WTC11 (cell line): ENCODE measurements at regions of chr10 and their contacts with region 1.

Region 1: GRCh38 chr10:78047314-78047891 is 13.7 kb downstream of the RPS24 start:
- DNase-seq: peak; percentile 97
- ATAC-seq: peak; percentile 65
- H3K4me3 Mint-ChIP-seq: no peak overlapping the region
- H3K27ac Mint-ChIP-seq: no peak overlapping the region
- H3K4me1 Mint-ChIP-seq: peaks cover 33% of the 10 kb centered on the region
- H3K27me3 Mint-ChIP-seq: no peaks in the 10 kb centered on the region
- CTCF ChIP-seq: peak; percentile 92

Region 2: DNA sequence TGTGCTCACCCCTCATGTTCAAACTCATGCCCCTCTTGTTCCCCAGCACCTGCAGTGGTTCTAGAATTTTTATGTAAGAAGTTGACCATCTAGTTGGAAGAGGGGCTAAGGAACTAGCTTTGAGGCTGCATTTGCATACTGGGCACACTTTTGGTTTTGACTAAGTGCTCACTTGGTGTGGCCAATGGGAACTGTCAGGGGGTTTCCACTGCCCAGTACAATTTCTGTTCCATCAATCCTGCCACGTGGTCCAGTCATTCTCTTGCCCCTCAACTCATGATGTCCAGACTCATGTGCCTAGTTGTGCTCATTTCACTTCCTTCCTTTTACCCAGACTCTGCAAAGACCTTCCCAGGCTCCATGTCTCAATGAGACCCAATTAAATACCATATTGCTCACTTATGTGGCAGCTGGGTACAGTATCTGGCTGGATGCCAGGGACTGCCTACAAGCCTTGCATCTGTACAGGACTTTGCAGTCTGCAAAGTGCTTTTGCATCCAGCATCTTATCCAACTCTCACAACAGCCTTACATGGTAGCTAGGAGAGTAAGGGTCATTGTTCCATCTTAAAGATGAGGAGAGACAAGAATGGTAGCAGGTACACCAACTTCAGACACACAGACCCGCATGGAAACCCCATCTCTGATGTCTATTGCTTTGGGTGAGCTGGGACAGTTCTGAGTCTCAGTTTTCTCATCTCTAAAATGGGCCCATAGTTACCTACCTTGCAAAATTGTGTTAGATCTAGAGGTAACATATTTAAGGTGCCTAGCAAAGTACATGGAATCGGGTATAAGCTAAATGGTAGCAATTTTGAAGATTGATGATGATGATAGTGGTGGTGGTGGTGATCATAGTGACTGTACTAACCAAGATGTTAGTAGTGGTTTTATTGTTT is 379.7 kb before region 1 on chr10:
- CTCF ChIA-PET with region 1: no interaction called
- POLR2A ChIA-PET with region 1: no interaction called
- DNase-seq: no peak
- ATAC-seq: no peak
- H3K4me3 Mint-ChIP-seq: no peak overlapping the region
- H3K27ac Mint-ChIP-seq: no peak overlapping the region
- H3K4me1 Mint-ChIP-seq: peaks cover 16% of the 10 kb centered on the region
- H3K27me3 Mint-ChIP-seq: peaks cover 6% of the 10 kb centered on the region
- CTCF ChIP-seq: no peak

Region 3: DNA sequence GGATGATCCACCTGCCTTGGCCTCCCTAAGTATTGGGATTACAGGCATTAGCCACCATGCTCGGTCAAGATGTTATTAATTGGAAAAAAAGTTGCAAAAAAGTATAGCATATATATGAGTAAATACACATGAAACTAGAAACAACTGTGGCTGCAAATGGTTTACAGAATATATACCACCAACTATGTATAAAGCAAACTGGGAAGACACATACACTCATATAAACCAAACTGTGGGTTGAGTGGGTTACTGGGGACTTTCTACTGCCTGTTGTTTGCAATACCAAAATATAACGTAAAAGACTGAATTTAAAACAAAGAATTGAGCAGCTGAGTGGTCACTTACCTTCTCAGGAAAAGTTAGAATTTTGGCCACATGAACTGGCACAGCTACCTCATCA is 26.2 kb before region 1 on chr10:
- CTCF ChIA-PET with region 1: no interaction called
- POLR2A ChIA-PET with region 1: no interaction called
- DNase-seq: no peak
- ATAC-seq: no peak
- H3K4me3 Mint-ChIP-seq: no peak overlapping the region
- H3K27ac Mint-ChIP-seq: no peak overlapping the region
- H3K4me1 Mint-ChIP-seq: no peaks in the 10 kb centered on the region
- H3K27me3 Mint-ChIP-seq: no peaks in the 10 kb centered on the region
- CTCF ChIP-seq: no peak

Region 4: DNA sequence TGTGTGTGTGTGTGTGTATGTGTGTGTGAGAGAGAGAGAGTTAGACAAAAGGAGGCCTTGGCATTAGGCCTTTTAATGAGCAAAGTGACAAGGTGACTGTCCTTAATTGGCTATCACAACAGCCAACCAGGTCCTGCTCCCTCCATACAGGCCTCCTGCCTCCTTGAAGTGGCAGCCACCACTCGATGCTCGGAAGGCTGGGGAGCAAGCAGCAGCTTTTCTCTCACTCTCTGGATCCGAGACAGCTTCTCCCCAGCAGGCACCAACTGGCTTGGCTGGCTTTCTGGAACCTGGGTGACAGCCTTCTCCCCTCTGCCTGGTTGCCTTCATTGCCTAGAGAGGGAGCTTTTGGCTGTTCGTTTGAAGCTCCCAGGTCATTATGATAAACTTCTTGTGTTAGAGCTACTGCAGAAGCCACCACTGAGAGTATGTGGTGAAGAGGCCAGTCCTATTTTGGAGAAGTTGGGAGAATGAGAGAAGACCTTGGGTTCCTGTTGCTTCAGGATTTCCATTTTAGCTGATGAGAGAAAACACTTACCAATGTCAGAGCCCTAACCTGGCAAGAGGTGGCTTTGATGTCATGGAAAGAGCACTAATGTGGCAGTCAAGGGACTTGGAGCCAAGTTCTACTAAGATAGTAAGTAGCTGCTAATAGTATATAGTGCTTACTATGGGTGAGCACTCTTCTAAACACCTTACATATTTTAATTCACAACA is 23.9 kb after region 1 on chr10:
- CTCF ChIA-PET with region 1: interaction called, 13 read pairs
- POLR2A ChIA-PET with region 1: interaction called, 4 read pairs
- DNase-seq: no peak
- ATAC-seq: no peak
- H3K4me3 Mint-ChIP-seq: no peak overlapping the region
- H3K27ac Mint-ChIP-seq: no peak overlapping the region
- H3K4me1 Mint-ChIP-seq: peaks cover 5% of the 10 kb centered on the region
- H3K27me3 Mint-ChIP-seq: peaks cover 5% of the 10 kb centered on the region; the same call in 1 of the 2 replicates
- CTCF ChIP-seq: no peak

Region 5: DNA sequence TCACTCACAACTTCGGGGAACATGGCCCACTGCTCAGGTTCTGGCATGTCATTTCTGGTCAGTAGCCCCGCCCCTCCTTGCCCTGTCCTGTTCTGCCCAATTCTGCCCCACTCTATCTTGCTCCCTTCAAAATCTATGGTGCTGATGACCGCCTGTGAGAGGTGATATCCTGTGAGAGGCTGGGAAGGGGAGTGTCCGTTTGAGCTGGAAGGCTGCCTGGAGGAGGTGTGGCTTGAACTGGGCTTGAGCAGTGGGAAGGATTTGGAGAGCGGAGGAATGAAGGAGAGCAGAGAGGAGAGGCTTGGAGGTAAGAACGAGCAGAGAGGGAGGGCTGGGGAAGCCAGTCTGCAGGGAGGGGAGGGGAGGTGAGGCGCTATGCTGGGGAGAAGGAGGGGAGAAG is 131.5 kb after region 1 on chr10:
- CTCF ChIA-PET with region 1: interaction called, 19 read pairs
- POLR2A ChIA-PET with region 1: no interaction called
- DNase-seq: no peak
- ATAC-seq: peak; percentile 89
- H3K4me3 Mint-ChIP-seq: no peak overlapping the region
- H3K27ac Mint-ChIP-seq: no peak overlapping the region
- H3K4me1 Mint-ChIP-seq: peaks cover 34% of the 10 kb centered on the region
- H3K27me3 Mint-ChIP-seq: peaks cover 5% of the 10 kb centered on the region
- CTCF ChIP-seq: no peak

Region 6: DNA sequence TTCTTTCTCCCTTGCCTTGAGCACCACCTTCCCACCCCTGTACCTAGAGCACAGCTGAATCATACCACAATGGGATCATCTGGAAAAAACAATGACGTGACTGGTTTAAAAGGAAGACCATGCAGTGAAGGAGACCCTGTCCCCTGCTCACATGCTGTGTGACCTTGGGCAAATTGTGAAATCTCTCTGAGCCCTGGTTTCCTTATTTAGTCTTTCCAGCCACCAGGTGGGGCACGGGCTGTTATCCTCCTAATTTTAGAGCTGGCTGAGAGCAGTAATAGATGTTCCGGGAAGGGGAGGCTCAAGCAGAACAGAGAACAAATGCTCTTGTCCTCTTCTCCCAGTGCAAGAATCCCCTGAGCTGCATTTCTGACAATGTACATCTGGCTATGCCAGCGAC is 184.5 kb after region 1 on chr10:
- CTCF ChIA-PET with region 1: interaction called, 13 read pairs
- POLR2A ChIA-PET with region 1: no interaction called
- DNase-seq: no peak
- ATAC-seq: peak; percentile 56
- H3K4me3 Mint-ChIP-seq: no peak overlapping the region
- H3K27ac Mint-ChIP-seq: no peak overlapping the region
- H3K4me1 Mint-ChIP-seq: peaks cover 4% of the 10 kb centered on the region; the same call in 1 of the 2 replicates
- H3K27me3 Mint-ChIP-seq: no peaks in the 10 kb centered on the region
- CTCF ChIP-seq: no peak

Region 7: GRCh38 chr10:78292982-78293865 is 245.8 kb after region 1 on chr10:
- CTCF ChIA-PET with region 1: interaction called, 13 read pairs
- POLR2A ChIA-PET with region 1: no interaction called
- DNase-seq: peak; percentile 39
- ATAC-seq: peak; percentile 86
- H3K4me3 Mint-ChIP-seq: 0 out of 2 replicates have a peak overlapping the region, but pooled peaks have one; percentile 36
- H3K27ac Mint-ChIP-seq: peak overlapping the region; percentile 36; the same call in 1 of the 2 replicates
- H3K4me1 Mint-ChIP-seq: peaks cover 32% of the 10 kb centered on the region
- H3K27me3 Mint-ChIP-seq: no peaks in the 10 kb centered on the region
- CTCF ChIP-seq: no peak

Region 8: DNA sequence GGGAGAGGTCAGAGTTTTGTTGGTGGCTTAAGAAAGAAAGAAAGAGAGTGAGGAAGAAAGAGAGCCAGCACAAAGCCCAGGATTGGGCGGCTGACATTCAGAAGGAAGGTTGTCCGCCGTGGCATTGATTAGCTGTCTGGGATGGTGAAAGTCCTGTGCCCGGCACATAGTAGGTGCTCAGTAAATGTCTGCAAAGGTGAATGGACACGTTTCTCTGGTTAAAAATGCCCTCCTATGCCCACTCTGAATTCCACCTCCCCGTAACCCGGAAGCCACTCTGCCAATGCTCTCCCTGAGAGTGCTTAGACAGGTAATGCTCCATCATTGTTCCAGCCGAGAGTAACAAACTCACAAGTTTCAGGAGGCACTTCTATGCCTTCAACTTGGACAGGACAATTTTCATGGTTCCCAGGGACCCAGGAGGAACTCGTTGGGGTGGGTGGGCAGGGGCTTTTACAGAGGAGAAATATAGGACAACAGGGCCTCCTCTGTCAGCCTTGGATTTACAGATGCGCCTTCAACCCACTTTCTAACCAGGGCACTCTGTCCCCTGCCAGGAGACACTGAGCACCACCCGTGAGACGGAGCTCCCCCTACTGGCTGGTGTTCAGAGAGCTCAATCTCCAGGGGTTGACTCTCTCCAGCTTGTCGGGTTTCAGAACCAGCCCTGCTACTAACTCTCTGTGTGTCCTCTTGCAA is 609.9 kb after region 1 on chr10:
- CTCF ChIA-PET with region 1: interaction called, 16 read pairs
- POLR2A ChIA-PET with region 1: no interaction called
- DNase-seq: peak; percentile 87
- ATAC-seq: peak; percentile 99
- H3K4me3 Mint-ChIP-seq: no peak overlapping the region
- H3K27ac Mint-ChIP-seq: no peak overlapping the region
- H3K4me1 Mint-ChIP-seq: no peaks in the 10 kb centered on the region
- H3K27me3 Mint-ChIP-seq: no peaks in the 10 kb centered on the region
- CTCF ChIP-seq: peak; percentile 61